OCI-LY7 (cell line): ENCODE measurements at regions of chr2 and their contacts with region 1.

Region 1: DNA sequence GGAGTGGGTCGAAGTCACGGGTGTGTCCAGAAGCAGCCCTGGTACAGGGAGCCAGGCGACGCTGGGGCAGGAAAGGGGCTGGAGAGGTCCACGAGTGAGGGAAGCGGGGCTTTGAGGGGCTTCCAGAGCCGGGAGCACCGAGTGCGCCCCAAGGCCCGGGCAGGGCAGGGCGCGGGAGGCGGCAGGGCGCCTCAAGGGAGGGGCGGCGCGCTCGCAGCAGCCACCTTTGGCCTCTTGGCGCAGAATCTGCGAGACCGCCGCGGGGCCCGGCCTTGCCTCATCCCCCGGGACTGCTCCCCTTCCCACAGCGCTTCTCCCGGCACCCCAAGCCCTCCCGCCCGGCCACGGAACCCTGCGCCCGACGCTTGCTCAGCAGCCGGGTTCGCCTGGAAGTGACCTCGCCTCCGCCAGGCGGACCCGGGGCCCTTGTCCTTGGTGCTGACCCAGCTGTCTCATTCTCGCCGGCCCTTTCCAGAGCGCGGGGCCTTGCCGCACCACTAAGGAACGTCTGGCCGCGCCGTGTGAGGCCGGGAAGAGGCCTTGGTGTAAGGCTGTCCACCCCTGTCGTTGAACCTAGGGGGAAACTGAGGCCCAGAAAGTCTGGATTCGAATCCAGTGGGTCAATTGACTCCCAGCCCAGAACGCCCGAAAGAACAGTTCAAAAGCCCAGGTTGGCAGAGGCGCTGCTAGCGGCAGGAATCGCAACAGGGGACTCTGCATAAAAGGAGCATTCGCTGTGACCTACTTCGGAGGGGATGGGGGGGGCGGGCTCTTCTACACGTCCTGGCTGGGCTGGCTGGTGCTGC is 584 bp upstream of the DNER start:
- DNase-seq: no peak
- H3K4me3 ChIP-seq: no peak overlapping the region
- H3K27ac ChIP-seq: no peak overlapping the region
- H3K4me1 ChIP-seq: no peaks in the 10 kb centered on the region
- CTCF ChIP-seq: no peak

Region 2: DNA sequence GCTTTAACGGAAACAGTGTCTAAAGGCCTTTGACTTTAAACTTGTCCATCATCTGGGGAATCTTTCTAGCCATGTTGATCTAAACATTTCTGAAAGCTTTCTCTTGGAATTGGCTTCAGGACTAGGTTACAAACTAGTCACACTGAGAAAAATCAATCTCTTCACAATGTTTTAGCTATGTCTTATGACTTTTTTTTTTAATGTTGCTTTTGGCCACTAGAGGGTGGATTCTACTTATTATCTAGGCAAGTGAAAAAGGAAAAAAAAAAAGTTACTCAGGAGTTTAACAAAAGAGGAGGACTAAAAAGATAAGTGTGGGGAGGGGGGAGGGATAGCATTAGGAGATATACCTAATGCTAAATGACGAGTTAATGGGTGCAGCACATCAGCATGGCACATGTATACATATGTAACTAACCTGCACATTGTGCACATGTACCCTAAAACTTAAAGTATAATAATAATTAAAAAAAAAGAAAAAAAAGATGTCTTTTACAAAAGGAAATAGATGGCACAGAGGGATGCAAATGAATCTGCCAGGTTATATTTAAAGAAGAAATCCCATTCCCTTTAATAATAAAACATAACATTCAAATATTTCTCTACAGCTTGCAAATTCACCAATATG is 283.5 kb before region 1 on chr2:
- CTCF ChIA-PET with region 1: no interaction called
- POLR2A ChIA-PET with region 1: no interaction called
- intact Hi-C with region 1: loop called (anchors 5 kb)
- DNase-seq: peak; percentile 8
- H3K4me3 ChIP-seq: no peak overlapping the region
- H3K27ac ChIP-seq: no peak overlapping the region
- H3K4me1 ChIP-seq: no peaks in the 10 kb centered on the region
- CTCF ChIP-seq: peak; percentile 72